Activated T-helper 2 cell treated with anti-CD3 and anti-CD28 coated beads, Interferon-gamma antibody, Interleukin-2, Interleukin-4, amounts not matched to agents 10 μg/mL and 5 μg/mL and 100 μg/mL, durations not matched to agents 14 hours and 24 hours and 36 hours (primary cell): ENCODE measurements at regions of chr11 and their contacts with region 1.

Region 1: GRCh38 chr11:36265793-36266628 is 23.2 kb downstream of the COMMD9 start:
- DNase-seq: peak; percentile 29
- H3K4me3 Mint-ChIP-seq: no peak overlapping the region
- H3K27ac Mint-ChIP-seq: no peak overlapping the region
- H3K4me1 Mint-ChIP-seq: no peaks in the 10 kb centered on the region
- H3K27me3 Mint-ChIP-seq: no peaks in the 10 kb centered on the region

Region 2: GRCh38 chr11:35822815-35823495 is 443.1 kb before region 1 on chr11:
- intact Hi-C with region 1: loop called (anchors 5 kb)
- DNase-seq: no peak
- H3K4me3 Mint-ChIP-seq: no peak overlapping the region
- H3K27ac Mint-ChIP-seq: no peak overlapping the region
- H3K4me1 Mint-ChIP-seq: peaks cover 6% of the 10 kb centered on the region
- H3K27me3 Mint-ChIP-seq: no peaks in the 10 kb centered on the region

Region 3: DNA sequence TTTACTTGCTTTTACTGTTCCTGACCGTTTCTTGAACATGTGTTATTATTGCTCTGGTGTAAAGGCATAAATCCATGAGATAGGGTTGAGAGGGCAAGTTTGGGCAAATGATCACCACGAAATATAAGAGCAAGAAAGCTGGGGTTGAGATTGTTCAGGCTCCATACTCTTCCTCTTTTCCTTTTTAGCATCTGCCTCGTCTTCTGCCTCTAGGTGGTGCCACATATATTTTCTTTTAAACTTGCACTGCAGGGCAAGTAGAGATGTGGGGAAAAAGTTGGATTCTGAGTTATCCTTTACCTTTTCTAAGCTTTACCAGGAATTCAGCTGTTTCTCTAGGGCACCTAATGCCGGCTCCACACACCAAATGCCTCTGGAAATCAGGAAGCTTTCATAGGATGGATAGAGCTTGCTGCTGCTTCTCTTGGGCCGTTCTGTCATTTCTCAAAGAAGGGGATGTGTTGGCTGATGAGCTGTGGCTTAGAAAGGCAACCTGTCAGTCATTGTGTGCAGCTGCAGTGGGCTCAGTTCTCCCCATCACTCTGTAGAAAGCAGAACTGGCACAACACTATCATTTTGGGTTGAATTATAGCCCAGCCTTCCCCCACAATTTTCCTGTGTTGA is 223.9 kb before region 1 on chr11:
- intact Hi-C with region 1: loop called (anchors 5 kb)
- DNase-seq: no peak
- H3K4me3 Mint-ChIP-seq: no peak overlapping the region
- H3K27ac Mint-ChIP-seq: no peak overlapping the region
- H3K4me1 Mint-ChIP-seq: peaks cover 7% of the 10 kb centered on the region
- H3K27me3 Mint-ChIP-seq: peaks cover 5% of the 10 kb centered on the region